Dorsolateral prefrontal cortex (tissue), 120 donors: ENCODE measurements at regions of chr14 and their contacts with region 1.

Region 1: GRCh38 chr14:32934073-32934890 is 4.4 kb upstream of the NPAS3 start:
- DNase-seq: peak; percentile 11 to 75 (median 66)
- H3K4me3 ChIP-seq: peak overlapping the region; percentile 48 to 79 (median 68)
- H3K27ac ChIP-seq: peak overlapping the region in 56 of 59 donors; percentile 12 to 96 (median 84)
- H3K27me3 ChIP-seq: peaks cover 0 to 10% (median 0%) of the 10 kb centered on the region in 45 donors
- CTCF ChIP-seq: peak in 3 of 56 donors; percentile 9 to 13 (median 9)

Region 2: GRCh38 chr14:32576088-32576795 is 358.0 kb before region 1 on chr14:
- intact Hi-C with region 1: loop called (anchors 5 kb)
- DNase-seq: peak in 9 of 10 donors; percentile 31 to 72 (median 52)
- H3K4me3 ChIP-seq: peak overlapping the region in 36 of 59 donors; percentile 3 to 56 (median 32)
- H3K27ac ChIP-seq: peak overlapping the region in 48 of 59 donors; percentile 1 to 84 (median 60)
- H3K27me3 ChIP-seq: no peaks in the 10 kb centered on the region
- CTCF ChIP-seq: peak; percentile 91 to 99 (median 97)

Region 3: GRCh38 chr14:32710731-32711680 is 223.3 kb before region 1 on chr14:
- intact Hi-C with region 1: loop called (anchors 2 to 5 kb)
- DNase-seq: peak in 3 of 10 donors; percentile 25 to 62 (median 40)
- H3K4me3 ChIP-seq: peak overlapping the region in 50 of 59 donors; percentile 0 to 56 (median 28)
- H3K27ac ChIP-seq: peak overlapping the region in 58 of 59 donors; percentile 5 to 91 (median 80)
- H3K27me3 ChIP-seq: no peaks in the 10 kb centered on the region
- CTCF ChIP-seq: peak; percentile 54 to 88 (median 72)

Region 4: DNA sequence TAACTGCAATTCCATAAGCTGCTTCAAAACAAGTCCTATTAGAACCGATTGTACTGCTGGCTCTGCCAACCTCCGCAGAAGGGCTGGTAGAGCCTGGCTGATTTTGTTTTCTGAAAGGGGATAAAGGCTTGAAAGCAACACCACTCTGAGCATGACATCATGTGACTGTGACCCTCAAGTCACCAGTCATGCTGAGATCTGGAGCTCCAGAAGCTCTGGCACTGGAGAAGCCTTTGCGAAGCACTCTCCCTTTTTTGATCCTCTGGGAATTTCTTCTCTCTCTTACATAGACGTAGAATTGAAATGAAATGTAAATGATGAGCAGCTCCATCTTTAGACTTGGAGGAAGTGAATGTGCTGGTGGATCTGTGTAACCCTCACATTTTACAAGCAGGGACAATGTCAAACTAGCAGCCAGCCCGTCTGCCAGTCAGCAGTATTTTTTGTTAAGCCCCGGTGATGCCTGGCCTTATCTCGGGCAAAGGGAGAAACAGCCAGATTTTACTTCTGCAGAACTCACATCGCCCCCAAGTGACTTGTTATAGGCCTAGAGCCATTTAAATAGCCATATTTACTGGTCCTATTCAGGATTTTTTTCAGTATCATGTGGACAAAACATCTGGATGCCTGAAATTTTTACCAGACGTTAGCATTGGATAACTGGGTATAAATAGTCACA is 107.7 kb before region 1 on chr14:
- intact Hi-C with region 1: loop called (anchors 2 to 5 kb)
- DNase-seq: peak; percentile 6 to 71 (median 49)
- H3K4me3 ChIP-seq: peak overlapping the region in 46 of 59 donors; percentile 0 to 57 (median 25)
- H3K27ac ChIP-seq: peak overlapping the region; percentile 70 to 98 (median 92)
- H3K27me3 ChIP-seq: no peaks in the 10 kb centered on the region
- CTCF ChIP-seq: peak in 53 of 56 donors; percentile 8 to 74 (median 50)

Region 5: DNA sequence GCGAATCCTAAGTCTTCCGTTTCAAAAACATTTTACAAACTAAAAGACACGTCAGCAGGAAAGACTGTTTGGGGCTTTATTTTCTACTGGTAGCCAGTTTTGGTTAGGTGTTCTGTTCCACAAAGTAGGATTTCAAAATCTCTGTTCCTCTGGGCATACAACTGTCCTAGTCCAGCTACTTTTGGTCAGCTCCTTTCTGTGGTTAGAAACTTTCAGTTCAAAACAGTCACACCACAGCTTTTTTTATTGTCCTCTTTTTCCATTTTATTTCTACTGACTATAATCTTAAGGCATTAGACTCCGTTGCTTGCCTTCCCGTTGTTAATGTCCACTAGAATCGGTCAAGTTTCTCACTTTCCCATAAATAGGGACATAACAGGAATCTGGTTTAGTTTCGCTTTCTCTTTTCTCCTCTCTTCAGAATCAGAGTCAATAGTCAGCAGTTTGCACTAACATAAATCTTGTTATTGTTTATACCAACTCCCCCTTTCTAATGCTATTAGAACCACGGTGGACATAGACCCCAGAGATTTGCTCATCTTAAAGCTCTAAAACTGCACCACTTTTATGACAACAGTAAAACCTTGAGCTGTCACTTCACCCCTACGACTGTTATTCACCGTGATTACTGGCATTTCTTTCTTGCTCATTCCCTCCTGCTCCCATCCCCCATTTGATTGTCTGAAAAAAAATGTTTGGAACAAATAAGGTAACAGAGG is 37.1 kb before region 1 on chr14:
- intact Hi-C with region 1: loop called in 1 of 2 experiments (anchors 2 kb)
- DNase-seq: no peak
- H3K4me3 ChIP-seq: peak overlapping the region; percentile 30 to 75 (median 58)
- H3K27ac ChIP-seq: peak overlapping the region; percentile 23 to 88 (median 78)
- H3K27me3 ChIP-seq: no peaks in the 10 kb centered on the region
- CTCF ChIP-seq: peak in 1 of 56 donors; percentile 15

Region 6: DNA sequence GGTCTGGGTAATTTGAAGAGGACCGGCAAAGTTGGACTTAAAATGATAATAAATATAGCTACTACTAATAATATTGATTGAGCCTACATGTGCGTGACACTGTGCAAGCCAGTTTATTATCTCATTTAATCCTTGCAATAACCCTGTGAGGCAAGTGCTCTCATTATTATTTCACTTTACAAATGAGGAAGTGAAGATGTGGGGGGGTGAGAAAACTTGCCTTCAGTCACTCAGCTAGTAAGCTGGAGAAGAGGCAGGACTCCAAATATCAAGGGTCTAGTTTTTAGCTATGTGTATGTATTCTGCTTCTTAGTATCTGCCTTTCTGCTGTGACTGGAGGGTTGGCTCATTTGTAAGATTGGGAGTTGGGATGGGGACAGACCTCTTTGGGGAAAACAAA is 43.6 kb after region 1 on chr14:
- intact Hi-C with region 1: no loop called
- DNase-seq: no peak
- H3K4me3 ChIP-seq: no peak overlapping the region
- H3K27ac ChIP-seq: peak overlapping the region in 2 of 59 donors; percentile 6 to 22
- H3K27me3 ChIP-seq: no peaks in the 10 kb centered on the region
- CTCF ChIP-seq: no peak